ENCODE measurements at regions of chr3 and their contacts with region 1.

Region 1: DNA sequence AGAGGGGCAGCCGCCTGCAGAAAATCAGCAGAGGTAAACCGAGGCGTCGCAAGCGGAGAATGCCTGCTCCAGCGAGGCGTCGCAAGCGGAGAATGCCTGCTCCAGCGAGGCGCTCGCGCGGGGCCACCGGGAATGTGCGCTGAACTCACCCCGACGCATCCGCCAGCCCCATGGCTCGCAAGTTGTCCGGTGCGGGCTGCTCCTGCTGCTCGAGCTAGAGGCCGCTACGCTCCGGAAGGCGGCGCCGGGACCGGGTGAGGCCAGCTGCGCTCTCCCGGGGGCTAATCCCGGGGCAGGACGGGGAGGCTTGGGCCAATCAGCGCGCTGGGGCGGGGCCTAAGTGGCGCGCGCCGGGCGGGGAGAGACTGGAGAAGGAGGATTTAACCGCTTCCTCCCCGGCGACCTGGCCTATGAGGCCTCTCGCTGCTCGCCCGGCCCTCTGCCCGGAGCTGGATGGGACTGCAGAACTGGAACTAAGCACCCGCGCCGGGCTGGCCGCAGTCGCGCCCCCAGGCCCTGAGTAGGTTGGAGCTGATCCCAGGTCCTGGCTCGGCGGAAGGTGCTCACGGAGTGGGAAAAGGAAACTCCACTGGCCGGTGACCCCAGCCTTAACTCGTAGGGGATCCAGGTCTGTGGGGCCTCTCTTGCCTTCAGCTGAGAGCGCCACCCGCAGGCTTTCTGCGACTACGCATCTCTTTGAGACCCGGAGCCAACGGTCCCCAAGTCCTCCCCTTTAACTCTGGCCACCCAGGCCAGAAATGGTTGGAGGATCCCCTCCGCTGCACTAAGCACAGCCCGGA is at the start of gene SLC26A6:
- DNase-seq: peak; percentile 93 to 95 (median 94)
- H3K4me3 ChIP-seq: peak within 1 kb of the TSS; percentile 85 to 95 (median 89)
- H3K4me3 Mint-ChIP-seq: peak within 1 kb of the TSS; percentile 93
- H3K27ac ChIP-seq: peak within 1 kb of the TSS; percentile 31 to 78
- H3K27ac Mint-ChIP-seq: peak within 1 kb of the TSS; percentile 82 to 89 (median 84)
- H3K4me1 ChIP-seq: peaks cover 21 to 32% of the 10 kb centered on the region in 2 donors
- H3K4me1 Mint-ChIP-seq: peaks cover 23% of the 10 kb centered on the region
- H3K27me3 ChIP-seq: no peaks in the 10 kb centered on the region
- H3K27me3 Mint-ChIP-seq: peaks cover 2 to 4% (median 2%) of the 10 kb centered on the region in 3 donors
- CTCF ChIP-seq: peak; percentile 75
- polyA plus RNA-seq, gene SLC26A6: 16.3 to 92.8 (median 20.4) TPM

Region 2: GRCh38 chr3:48465531-48466378 is 169.7 kb before region 1 on chr3:
- intact Hi-C with region 1: loop called (anchors 10 kb)
- DNase-seq: peak; percentile 100
- H3K4me3 ChIP-seq: peak overlapping the region; percentile 55 to 91 (median 74)
- H3K4me3 Mint-ChIP-seq: peak overlapping the region; percentile 86 to 94
- H3K27ac ChIP-seq: peak overlapping the region; percentile 97 to 100
- H3K27ac Mint-ChIP-seq: peak overlapping the region; percentile 100
- H3K4me1 ChIP-seq: peaks cover 51% of the 10 kb centered on the region in 2 donors
- H3K4me1 Mint-ChIP-seq: peaks cover 47% of the 10 kb centered on the region
- H3K27me3 ChIP-seq: no peaks in the 10 kb centered on the region
- H3K27me3 Mint-ChIP-seq: peaks cover 0 to 2% (median 0%) of the 10 kb centered on the region in 3 donors
- CTCF ChIP-seq: no peak

Region 3: GRCh38 chr3:48564017-48564416 is 71.4 kb before region 1 on chr3:
- intact Hi-C with region 1: loop called in 1 of 2 experiments (anchors 2 kb)
- DNase-seq: peak; percentile 96 to 99 (median 98)
- H3K4me3 ChIP-seq: peak overlapping the region in 1 of 3 experiments; percentile 24
- H3K4me3 Mint-ChIP-seq: peak overlapping the region; percentile 17 to 78
- H3K27ac ChIP-seq: peak overlapping the region; percentile 47 to 78
- H3K27ac Mint-ChIP-seq: peak overlapping the region; percentile 83 to 98 (median 96)
- H3K4me1 ChIP-seq: peaks cover 75 to 78% of the 10 kb centered on the region in 2 donors
- H3K4me1 Mint-ChIP-seq: peaks cover 74% of the 10 kb centered on the region
- H3K27me3 ChIP-seq: no peaks in the 10 kb centered on the region
- H3K27me3 Mint-ChIP-seq: peaks cover 1 to 12% (median 2%) of the 10 kb centered on the region in 3 donors
- CTCF ChIP-seq: no peak

Region 4: DNA sequence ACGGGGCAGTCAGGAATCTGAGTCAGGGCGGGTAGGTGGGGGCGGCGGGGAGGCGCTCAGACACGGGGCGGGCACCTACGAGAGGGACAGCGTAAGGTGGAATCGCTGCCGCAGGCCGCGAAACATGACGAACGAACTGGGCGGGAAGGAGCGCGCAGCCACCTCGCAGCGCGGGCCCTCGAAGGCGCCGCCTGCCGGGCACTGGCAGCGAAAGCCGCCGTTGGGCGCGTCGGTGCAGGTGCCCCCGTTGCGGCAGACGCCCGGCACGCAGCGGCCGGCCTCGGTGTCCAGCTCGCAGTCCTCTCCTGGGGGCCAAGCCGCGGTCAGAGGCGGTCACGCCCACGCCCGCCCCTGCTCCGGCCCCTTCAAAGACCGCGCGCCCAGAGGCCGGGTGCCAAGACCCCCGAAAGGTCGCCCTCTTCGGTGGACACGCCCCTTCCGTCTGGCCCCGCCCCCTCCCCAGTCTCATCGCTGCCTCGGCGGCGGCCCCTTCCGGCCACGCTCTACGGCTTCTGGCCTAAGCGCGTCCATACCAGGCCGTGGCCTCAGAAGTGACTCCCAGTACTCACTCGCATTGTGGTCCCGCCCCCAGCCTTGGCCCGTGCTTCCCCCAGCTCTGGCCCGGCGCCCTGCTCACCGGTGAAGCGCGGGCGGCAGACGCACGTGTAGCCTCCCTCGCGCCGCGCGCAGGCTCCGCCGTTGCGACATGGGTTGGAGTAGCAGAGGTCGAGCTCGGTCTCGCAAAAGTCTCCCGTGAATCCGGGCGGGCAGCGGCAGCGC is 20.8 kb after region 1 on chr3:
- intact Hi-C with region 1: no loop called
- DNase-seq: peak; percentile 79 to 81 (median 80)
- H3K4me3 ChIP-seq: peak overlapping the region; percentile 34 to 77 (median 47)
- H3K4me3 Mint-ChIP-seq: peak overlapping the region; percentile 75 to 79
- H3K27ac ChIP-seq: peak overlapping the region in 1 of 2 donors; percentile 59
- H3K27ac Mint-ChIP-seq: peak overlapping the region in 1 of 7 donors; percentile 30
- H3K4me1 ChIP-seq: peaks cover 18 to 28% of the 10 kb centered on the region in 2 donors
- H3K4me1 Mint-ChIP-seq: peaks cover 16% of the 10 kb centered on the region
- H3K27me3 ChIP-seq: peaks cover under 1 to 31% of the 10 kb centered on the region in 2 donors
- H3K27me3 Mint-ChIP-seq: peaks cover 22 to 45% (median 23%) of the 10 kb centered on the region in 3 donors
- CTCF ChIP-seq: peak; percentile 85

Measured in CD14-positive monocyte (primary cell).